HEK293 (cell line): ENCODE measurements at regions of chr11 and their contacts with region 1.

Region 1: DNA sequence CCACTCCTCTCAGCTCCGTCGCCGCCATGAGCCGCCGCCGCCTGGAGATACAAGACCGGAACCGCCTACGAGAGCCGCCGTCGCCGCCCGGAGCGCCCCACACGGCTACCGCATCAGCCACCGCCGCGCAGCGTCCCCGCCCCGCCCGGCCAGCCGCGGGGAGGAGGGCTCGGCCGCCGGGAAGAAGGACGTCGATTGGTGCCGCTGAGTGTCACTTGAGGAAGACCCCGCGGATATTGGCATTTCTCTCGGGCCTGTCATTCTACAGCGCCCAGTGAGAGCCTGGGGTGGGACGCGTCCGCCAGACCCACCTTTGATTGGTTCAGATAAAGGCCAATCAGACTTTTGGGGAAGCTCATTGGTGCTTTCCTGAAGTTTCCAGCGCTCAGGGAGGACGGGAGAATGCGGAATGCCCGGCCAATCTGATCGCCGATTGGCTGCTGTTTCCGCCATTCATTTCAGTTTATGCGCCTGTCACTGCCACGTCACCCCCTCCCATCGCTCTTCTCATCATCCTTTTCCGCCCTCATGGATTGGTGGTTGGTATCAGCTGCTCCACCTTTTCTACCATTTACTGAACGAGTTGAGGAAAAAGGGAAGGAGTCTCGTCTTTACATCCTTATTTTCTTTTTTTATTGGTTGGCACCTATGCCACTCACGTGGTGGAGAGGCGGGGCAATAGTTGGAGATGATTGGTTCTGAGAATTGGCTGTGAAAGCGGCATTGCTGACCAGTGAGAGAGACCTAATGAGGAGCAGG is at the start of gene OSBP:
- H3K4me3 ChIP-seq: peak within 1 kb of the TSS; percentile 79
- H3K27ac ChIP-seq: peak within 1 kb of the TSS; percentile 63; the same call in 1 of the 2 replicates
- H3K4me1 ChIP-seq: no peaks in the 10 kb centered on the region
- CTCF ChIP-seq: no peak

Region 2: GRCh38 chr11:59560702-59561469 is 54.9 kb before region 1 on chr11:
- CTCF ChIA-PET with region 1: no interaction called
- POLR2A ChIA-PET with region 1: interaction called, 11 read pairs
- H3K4me3 ChIP-seq: peak overlapping the region; percentile 70
- H3K27ac ChIP-seq: peak overlapping the region; percentile 18
- H3K4me1 ChIP-seq: no peaks in the 10 kb centered on the region
- CTCF ChIP-seq: no peak

Region 3: DNA sequence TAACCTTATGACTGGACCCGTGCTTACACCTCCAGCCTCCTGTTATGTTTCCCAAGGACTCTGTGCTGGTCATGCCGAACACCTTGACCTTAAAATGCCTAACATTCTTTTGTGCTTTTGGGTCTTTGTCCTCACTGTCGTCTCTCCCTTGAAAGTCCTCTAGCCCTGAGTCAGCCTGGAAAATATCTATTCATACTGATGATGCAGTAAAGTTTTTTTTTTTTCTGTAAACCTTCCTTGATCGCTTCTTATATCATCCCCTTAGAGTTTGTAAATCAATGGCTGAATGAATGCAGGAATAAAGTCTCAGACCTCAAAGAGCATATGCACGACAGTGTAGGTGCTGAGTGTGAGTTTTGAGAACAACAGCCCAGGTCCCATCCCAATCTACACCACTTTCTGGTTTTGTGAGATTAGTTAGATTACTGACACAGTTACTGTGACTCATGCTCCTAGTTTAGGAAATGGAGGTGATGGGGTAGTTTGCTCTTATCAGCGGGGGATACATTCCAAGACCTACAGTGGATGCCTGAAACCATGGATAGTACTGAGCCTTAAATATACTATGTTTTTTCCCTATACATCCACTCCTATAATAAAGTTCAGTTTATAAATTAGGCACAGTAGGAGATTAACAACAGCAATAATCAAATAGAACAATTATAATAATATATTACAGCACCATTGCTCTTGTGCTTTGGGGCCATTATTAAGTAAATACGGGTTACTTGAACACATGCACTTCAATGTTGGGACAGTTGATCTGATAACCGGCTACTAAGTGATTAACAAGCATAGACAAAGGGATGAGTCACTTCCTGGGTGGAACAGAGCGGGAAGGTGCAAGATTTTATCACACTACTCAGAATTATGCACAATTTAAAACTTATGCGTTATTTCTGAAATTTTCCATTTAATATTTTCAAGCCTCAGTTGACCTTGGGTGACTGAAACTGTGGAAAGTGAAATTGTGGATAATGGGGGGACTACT is 241.9 kb after region 1 on chr11:
- CTCF ChIA-PET with region 1: no interaction called
- POLR2A ChIA-PET with region 1: no interaction called
- H3K4me3 ChIP-seq: no peak overlapping the region
- H3K27ac ChIP-seq: no peak overlapping the region
- H3K4me1 ChIP-seq: no peaks in the 10 kb centered on the region
- CTCF ChIP-seq: no peak